HepG2 (cell line): ENCODE measurements at regions of chr12 and their contacts with region 1.

Region 1: DNA sequence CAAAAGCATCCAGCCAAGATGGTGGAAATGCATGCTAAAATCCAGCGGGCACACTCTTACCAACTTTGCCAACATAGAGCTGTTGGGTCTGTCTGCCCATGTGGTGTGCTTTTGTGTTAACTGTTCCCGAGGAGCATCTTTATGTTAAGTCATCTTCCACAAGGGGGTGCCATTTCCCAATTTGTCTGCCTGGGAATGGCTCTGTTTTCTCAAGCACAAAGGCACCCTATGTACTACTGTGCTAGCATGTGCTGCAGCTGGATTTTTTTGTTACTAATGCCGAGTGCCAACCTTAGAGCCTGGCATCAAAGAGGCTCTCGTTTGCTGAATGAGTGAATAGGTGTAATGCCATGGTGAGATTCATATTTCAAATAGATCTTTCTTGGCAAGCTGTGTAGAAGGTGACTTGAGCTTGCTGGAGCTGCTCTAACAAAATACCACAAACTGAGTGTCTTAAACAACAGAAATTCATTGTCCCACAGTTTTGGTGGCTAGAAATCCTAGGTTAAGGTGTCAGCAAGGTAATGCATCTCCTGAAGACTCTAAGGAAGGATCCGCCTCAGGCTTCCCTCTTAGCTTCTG is 74.3 kb downstream of the TRHDE start:
- DNase-seq: peak; percentile 62
- ATAC-seq: peak; percentile 100
- H3K4me3 ChIP-seq: no peak overlapping the region
- H3K27ac ChIP-seq: no peak overlapping the region
- H3K4me1 ChIP-seq: no peaks in the 10 kb centered on the region
- H3K27me3 ChIP-seq: no peaks in the 10 kb centered on the region
- CTCF ChIP-seq: peak; percentile 81
- EP300 ChIP-seq: no peak
- POLR2A ChIP-seq: no peak
- RAD21 ChIP-seq: peak; percentile 51; the same call in 1 of the 2 replicates

Region 2: GRCh38 chr12:72465940-72466637 is 119.6 kb after region 1 on chr12:
- CTCF ChIA-PET with region 1: no interaction called
- POLR2A ChIA-PET with region 1: no interaction called
- in situ Hi-C with region 1: no loop called
- intact Hi-C with region 1: loop called (anchors 1 kb)
- DNase-seq: peak; percentile 2
- ATAC-seq: peak; percentile 65; the same call in 2 of the 3 replicates
- H3K4me3 ChIP-seq: no peak overlapping the region
- H3K27ac ChIP-seq: no peak overlapping the region
- H3K4me1 ChIP-seq: no peaks in the 10 kb centered on the region
- H3K27me3 ChIP-seq: no peaks in the 10 kb centered on the region
- CTCF ChIP-seq: peak; percentile 26; the same call in 1 of the 2 replicates
- EP300 ChIP-seq: no peak
- POLR2A ChIP-seq: no peak
- RAD21 ChIP-seq: no peak

Region 3: GRCh38 chr12:74317078-74317601 is 1970.7 kb after region 1 on chr12:
- CTCF ChIA-PET with region 1: no interaction called
- POLR2A ChIA-PET with region 1: no interaction called
- in situ Hi-C with region 1: no loop called
- intact Hi-C with region 1: loop called (anchors 2 kb)
- DNase-seq: no peak
- ATAC-seq: peak; percentile 84
- H3K4me3 ChIP-seq: no peak overlapping the region
- H3K27ac ChIP-seq: no peak overlapping the region
- H3K4me1 ChIP-seq: no peaks in the 10 kb centered on the region
- H3K27me3 ChIP-seq: no peaks in the 10 kb centered on the region; a peak in 1 of 5 replicates
- CTCF ChIP-seq: peak; percentile 50
- EP300 ChIP-seq: no peak
- POLR2A ChIP-seq: no peak
- RAD21 ChIP-seq: no peak